ENCODE measurements at regions of chr2 and their contacts with region 1.

Region 1: GRCh38 chr2:95389245-95390119 is 13.0 kb upstream of the FAHD2A start:
- DNase-seq: peak; percentile 69
- H3K4me3 Mint-ChIP-seq: no peak overlapping the region
- H3K27ac Mint-ChIP-seq: no peak overlapping the region
- H3K4me1 Mint-ChIP-seq: no peaks in the 10 kb centered on the region
- H3K27me3 Mint-ChIP-seq: peaks cover 10% of the 10 kb centered on the region

Region 2: GRCh38 chr2:95289253-95289652 is 100.2 kb before region 1 on chr2:
- CTCF ChIA-PET with region 1: no interaction called
- DNase-seq: no peak
- H3K4me3 Mint-ChIP-seq: no peak overlapping the region
- H3K27ac Mint-ChIP-seq: no peak overlapping the region
- H3K4me1 Mint-ChIP-seq: no peaks in the 10 kb centered on the region
- H3K27me3 Mint-ChIP-seq: no peaks in the 10 kb centered on the region

Region 3: DNA sequence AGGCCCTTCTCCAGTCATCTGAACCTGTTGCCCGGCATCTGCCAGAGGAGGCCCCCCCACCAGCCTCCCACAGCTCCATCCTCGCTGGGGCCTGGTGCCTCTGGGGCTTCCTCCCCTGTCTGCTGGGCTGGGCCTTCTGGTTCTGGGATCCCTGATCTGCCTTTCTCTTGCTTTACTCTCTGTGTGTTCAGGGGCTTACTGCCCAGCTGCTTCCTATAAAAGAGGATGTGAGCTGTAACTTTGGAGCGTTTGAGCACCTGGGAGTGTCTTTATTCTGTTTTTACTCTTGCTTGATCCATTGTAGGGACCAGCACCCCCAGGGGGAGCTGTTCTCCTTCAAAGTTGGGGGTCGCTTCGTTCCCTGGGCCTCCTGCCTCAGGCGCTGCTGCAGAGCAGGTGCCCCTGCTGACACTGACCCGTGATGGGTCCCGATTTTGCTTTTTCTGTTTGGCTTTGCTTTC is 10.1 kb before region 1 on chr2:
- CTCF ChIA-PET with region 1: interaction called, 22 read pairs
- DNase-seq: peak; percentile 20
- H3K4me3 Mint-ChIP-seq: no peak overlapping the region
- H3K27ac Mint-ChIP-seq: no peak overlapping the region
- H3K4me1 Mint-ChIP-seq: peaks cover 5% of the 10 kb centered on the region
- H3K27me3 Mint-ChIP-seq: peaks cover 21% of the 10 kb centered on the region

Region 4: DNA sequence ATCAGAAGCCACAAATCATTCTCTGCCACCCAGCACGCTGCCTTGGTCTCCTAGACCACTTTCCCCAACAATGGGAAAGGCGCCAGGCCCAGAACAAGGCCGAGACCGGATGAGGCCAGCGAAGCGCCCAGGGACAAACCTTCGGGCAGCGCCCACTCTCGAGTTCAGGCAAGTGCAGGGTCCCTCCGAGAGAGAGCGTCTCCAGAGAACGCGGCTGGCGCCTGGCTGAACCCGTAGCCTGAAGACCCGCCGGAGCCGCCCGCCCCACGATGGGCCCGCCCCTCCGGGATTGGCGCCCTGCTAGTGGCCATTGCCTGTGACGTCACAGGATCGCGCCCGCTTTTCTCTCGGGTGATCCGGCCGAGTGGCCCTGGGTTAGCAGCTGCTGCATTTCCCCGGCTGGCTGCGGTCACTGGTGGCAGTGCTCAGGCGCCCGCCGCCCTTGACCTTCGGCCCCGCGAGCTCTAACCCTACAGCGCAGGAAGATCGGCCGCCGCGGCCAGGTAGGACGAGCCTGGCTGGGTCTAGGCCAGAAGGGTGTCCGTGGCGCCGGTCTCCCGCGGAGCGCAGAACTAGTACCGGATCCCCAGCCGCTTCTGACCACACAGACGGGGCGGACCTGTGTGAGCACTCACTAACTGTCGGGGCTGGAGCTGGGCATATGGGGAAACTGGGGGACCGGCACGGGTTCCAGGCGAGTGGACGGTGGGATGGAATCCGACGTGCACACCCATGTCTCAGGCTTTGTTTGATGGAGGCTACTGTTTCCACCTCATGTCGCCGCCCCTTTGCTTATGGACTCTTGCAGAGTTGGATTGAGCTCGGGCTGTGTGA is 13.1 kb after region 1 on chr2 and contains the start of gene FAHD2A:
- CTCF ChIA-PET with region 1: interaction called, 20 read pairs
- DNase-seq: peak; percentile 99
- H3K4me3 Mint-ChIP-seq: peak within 1 kb of the TSS; percentile 97
- H3K27ac Mint-ChIP-seq: peak within 1 kb of the TSS; percentile 94
- H3K4me1 Mint-ChIP-seq: peaks cover 20% of the 10 kb centered on the region
- H3K27me3 Mint-ChIP-seq: peaks cover 3% of the 10 kb centered on the region

Measured in activated naive CD4-positive, alpha-beta T cell treated with anti-CD3 and anti-CD28 coated beads, Interleukin-2, amount 10 ng/mL, durations not matched to agents 7 days and 5 days (primary cell).